Left colon (tissue), 2 donors: ENCODE measurements at regions of chr9 and their contacts with region 1.

Region 1: DNA sequence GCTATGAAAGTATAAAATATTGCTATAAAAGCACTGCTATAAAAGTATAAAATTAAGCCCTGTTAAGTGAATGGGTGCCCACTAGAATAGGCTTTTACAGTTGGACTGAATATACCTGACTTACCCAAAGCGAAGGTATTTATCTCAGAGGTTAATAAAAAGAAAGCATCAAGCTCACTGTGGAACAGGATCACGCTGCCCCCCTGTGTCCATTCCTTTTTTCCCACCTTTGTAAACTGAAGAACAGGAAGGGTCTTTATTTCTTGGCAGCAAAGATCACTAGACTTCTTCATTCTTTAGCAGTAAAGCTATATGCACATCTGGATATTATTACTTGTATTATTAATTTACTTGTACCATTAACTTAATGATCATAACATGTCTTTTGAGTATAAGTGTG is 22.1 kb upstream of the PLPP6 start:
- DNase-seq: peak in 1 of 2 donors; percentile 40
- ATAC-seq: no peak

Region 2: DNA sequence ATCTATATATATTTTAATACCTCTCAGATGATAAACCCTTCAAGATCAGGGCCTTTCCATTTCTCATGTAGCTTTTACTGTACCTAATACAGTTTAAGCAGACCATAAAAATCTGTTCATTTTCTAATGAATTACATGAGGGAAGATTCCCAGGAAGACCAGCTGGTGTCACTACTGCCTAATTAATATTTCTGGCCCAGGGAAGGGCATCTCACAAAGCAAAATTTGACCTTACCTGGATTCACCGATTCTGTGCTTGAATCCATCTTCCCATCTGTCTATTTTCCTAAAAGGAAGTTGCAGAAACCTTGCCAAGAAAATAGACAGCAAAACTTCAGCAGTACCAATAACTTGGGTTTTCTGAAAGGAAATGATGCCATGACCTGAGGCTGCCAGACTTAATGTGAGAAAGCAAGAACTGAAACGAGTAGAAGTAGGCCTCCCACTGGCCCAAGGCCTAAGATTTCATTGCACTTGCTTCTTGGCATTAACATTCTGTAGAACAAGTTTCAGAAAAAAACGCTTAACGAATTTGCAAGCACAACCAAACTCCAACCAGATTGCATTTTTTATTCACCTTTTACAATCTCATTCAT is 257.2 kb before region 1 on chr9:
- intact Hi-C with region 1: loop called in 1 of 2 experiments (anchors 5 kb)
- DNase-seq: no peak
- ATAC-seq: peak; percentile 50